ENCODE measurements at regions of chr7 and their contacts with region 1.

Region 1: GRCh38 chr7:47100817-47101435 is 481.0 kb downstream of the TNS3 start:
- DNase-seq: peak; percentile 45 to 79
- ATAC-seq: peak; percentile 92 to 97
- H3K4me3 ChIP-seq: peak overlapping the region; percentile 28; the same call in 2 of the 3 replicates
- H3K27ac ChIP-seq: peak overlapping the region; percentile 23 to 31; a peak in 1 of 6 replicates
- H3K4me1 ChIP-seq: peaks cover 4% of the 10 kb centered on the region; the same call in 1 of the 3 replicates
- CTCF ChIP-seq: peak; percentile 68
- EP300 ChIP-seq: no peak
- POLR2A ChIP-seq: no peak
- RAD21 ChIP-seq: peak; percentile 56 to 62

Region 2: GRCh38 chr7:47088329-47089067 is 12.4 kb before region 1 on chr7:
- CTCF ChIA-PET with region 1: interaction called, 12 read pairs
- POLR2A ChIA-PET with region 1: no interaction called
- DNase-seq: peak; percentile 57 to 65
- ATAC-seq: peak; percentile 90 to 98
- H3K4me3 ChIP-seq: no peak overlapping the region
- H3K27ac ChIP-seq: peak overlapping the region; percentile 59 to 74
- H3K4me1 ChIP-seq: peaks cover 15% of the 10 kb centered on the region
- CTCF ChIP-seq: peak; percentile 91
- EP300 ChIP-seq: no peak
- POLR2A ChIP-seq: no peak
- RAD21 ChIP-seq: peak; percentile 95 to 98

Region 3: DNA sequence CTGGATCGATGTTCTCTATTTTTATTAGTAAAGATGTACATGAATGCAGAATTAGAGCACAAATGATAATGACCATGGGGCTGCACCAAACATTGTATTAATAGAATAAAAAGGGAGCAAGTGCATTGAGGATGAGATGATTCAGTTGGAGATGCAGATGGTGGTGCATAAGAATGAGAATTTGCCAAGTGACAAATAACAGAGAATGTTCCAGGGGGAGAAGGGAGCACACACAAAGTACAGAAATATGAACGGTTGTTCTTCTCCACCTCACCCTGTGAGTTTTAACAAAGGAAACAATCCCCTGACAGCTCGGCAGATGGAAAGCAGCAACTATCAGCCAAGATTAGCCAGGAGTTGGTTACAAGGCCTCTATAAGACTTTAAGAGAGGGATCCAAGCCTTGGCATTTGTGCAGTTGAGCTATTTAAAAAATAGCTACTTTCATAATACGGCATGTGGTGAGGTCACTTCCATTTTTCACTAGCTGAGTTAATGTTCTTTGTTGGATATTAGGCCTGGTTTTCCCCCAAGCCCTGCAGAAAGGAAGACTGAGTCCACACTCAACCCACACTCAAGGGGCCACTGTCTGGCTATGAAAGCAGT is 18.4 kb after region 1 on chr7:
- CTCF ChIA-PET with region 1: interaction called, 11 read pairs
- POLR2A ChIA-PET with region 1: no interaction called
- DNase-seq: no peak
- ATAC-seq: no peak
- H3K4me3 ChIP-seq: no peak overlapping the region
- H3K27ac ChIP-seq: no peak overlapping the region
- H3K4me1 ChIP-seq: no peaks in the 10 kb centered on the region
- CTCF ChIP-seq: no peak
- EP300 ChIP-seq: no peak
- POLR2A ChIP-seq: no peak
- RAD21 ChIP-seq: no peak

Region 4: GRCh38 chr7:47179812-47180515 is 79.0 kb after region 1 on chr7:
- CTCF ChIA-PET with region 1: interaction called, 11 read pairs
- POLR2A ChIA-PET with region 1: no interaction called
- DNase-seq: peak; percentile 55 to 66
- ATAC-seq: peak; percentile 89 to 96
- H3K4me3 ChIP-seq: no peak overlapping the region
- H3K27ac ChIP-seq: peak overlapping the region; percentile 32 to 72; a peak in 5 of 6 replicates
- H3K4me1 ChIP-seq: peaks cover 6% of the 10 kb centered on the region; the same call in 2 of the 3 replicates
- CTCF ChIP-seq: peak; percentile 96
- EP300 ChIP-seq: no peak
- POLR2A ChIP-seq: no peak
- RAD21 ChIP-seq: peak; percentile 96